K562 (cell line): ENCODE measurements at regions of chr11 and their contacts with region 1.

Region 1: GRCh38 chr11:2951231-2952110 is 22.3 kb upstream of the PHLDA2 start:
- DNase-seq: no peak
- ATAC-seq: no peak
- H3K4me3 ChIP-seq: no peak overlapping the region
- H3K27ac ChIP-seq: peak overlapping the region; percentile 29; the same call in 2 of the 3 replicates
- H3K4me1 ChIP-seq: peaks cover 0 to 9% of the 10 kb centered on the region in 2 experiments; a peak in 2 of 5 replicates
- H3K27me3 ChIP-seq: no peaks in the 10 kb centered on the region
- CTCF ChIP-seq: no peak
- EP300 ChIP-seq: no peak
- POLR2A ChIP-seq: no peak
- RAD21 ChIP-seq: no peak

Region 2: GRCh38 chr11:2860636-2861035 is 90.8 kb before region 1 on chr11:
- CTCF ChIA-PET with region 1: no interaction called
- POLR2A ChIA-PET with region 1: no interaction called
- in situ Hi-C with region 1: no loop called
- intact Hi-C with region 1: no loop called
- DNase-seq: peak in 1 of 4 experiments; percentile 34
- ATAC-seq: no peak
- H3K4me3 ChIP-seq: no peak overlapping the region
- H3K27ac ChIP-seq: no peak overlapping the region
- H3K4me1 ChIP-seq: peaks cover 0 to 33% of the 10 kb centered on the region in 2 experiments; a peak in 2 of 5 replicates
- H3K27me3 ChIP-seq: peaks cover 0 to 26% of the 10 kb centered on the region in 2 experiments; a peak in 3 of 5 replicates
- CTCF ChIP-seq: no peak
- EP300 ChIP-seq: no peak
- POLR2A ChIP-seq: no peak
- RAD21 ChIP-seq: no peak

Region 3: GRCh38 chr11:2940559-2940929 is 10.9 kb before region 1 on chr11:
- CTCF ChIA-PET with region 1: no interaction called
- POLR2A ChIA-PET with region 1: interaction called, 33 read pairs
- in situ Hi-C with region 1: no loop called
- intact Hi-C with region 1: no loop called
- DNase-seq: no peak
- ATAC-seq: no peak
- H3K4me3 ChIP-seq: no peak overlapping the region
- H3K27ac ChIP-seq: no peak overlapping the region
- H3K4me1 ChIP-seq: peaks cover 0 to 32% of the 10 kb centered on the region in 2 experiments; a peak in 2 of 5 replicates
- H3K27me3 ChIP-seq: no peaks in the 10 kb centered on the region
- CTCF ChIP-seq: no peak
- EP300 ChIP-seq: no peak
- POLR2A ChIP-seq: no peak
- RAD21 ChIP-seq: no peak

Region 4: DNA sequence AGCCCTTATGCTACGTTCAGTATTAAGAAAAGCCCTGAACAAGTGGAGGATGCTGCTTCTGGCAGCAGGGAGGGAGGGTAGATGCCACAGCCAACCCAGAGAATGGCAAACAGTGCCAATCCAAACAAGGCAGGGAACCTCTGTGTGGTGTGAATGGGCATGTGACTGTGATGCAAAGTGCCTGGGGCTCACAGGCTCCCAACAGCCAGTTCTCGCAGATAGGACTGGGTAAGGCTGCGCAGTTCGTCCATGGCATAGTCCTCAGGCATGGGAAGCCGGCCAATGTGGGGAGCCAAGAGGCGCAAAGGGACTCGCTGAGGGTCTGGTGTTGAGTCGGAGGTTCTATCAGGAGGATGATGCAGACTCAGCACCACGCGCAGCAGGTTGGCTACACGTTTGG is 724.5 kb after region 1 on chr11:
- CTCF ChIA-PET with region 1: no interaction called
- POLR2A ChIA-PET with region 1: no interaction called
- in situ Hi-C with region 1: no loop called
- intact Hi-C with region 1: no loop called
- DNase-seq: no peak
- ATAC-seq: no peak
- H3K4me3 ChIP-seq: no peak overlapping the region
- H3K27ac ChIP-seq: no peak overlapping the region
- H3K4me1 ChIP-seq: no peaks in the 10 kb centered on the region
- H3K27me3 ChIP-seq: no peaks in the 10 kb centered on the region
- CTCF ChIP-seq: no peak
- EP300 ChIP-seq: no peak
- POLR2A ChIP-seq: no peak
- RAD21 ChIP-seq: no peak